Left lung (tissue), 14 donors: ENCODE measurements at regions of chr1 and their contacts with region 1.

Region 1: DNA sequence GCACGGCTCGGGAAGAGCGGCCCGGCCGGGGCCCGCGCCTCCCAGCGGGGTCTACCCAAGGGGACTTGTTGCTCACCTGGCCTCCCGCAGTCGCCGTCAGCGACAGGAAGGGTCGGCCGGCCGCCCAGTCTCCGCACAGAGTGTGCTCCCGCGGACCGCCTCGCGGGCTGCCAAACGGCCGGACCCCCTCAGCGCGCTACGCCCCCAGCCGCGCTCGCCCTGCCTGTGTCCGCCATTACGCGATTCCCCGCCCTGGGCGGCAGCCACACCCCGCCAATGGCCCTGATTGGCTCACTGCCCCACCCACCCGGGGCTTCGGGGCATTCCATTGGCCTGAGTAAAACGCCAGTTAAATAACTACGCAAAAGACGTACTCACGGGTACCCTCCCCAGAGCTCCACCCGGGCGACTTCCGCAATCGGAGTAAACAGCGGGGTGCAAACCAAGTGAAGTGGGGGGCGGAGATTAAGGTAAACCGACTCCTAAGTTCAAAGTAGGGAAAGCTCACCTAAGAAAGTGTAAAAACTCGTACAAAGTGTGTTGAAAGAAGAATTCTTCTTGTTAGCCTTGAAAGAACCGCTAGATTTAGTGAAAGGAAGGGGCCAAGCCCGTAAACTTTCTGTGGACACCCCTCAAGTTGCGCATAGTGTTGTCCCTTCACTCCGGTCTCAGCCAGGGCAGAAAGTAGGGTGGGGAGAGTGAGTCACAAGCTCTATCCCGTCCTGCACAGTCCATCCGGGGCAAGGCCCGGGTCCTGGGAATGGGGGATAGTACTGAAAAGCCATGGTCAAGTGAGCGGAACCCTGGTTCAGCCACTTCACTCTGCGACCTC is at the start of gene WASF2:
- DNase-seq: peak; percentile 97 to 98 (median 98)
- ATAC-seq: peak; percentile 94
- H3K4me3 ChIP-seq: peak within 1 kb of the TSS; percentile 80 to 99
- H3K27ac ChIP-seq: peak within 1 kb of the TSS; percentile 96 to 100
- H3K4me1 ChIP-seq: peaks cover 22 to 57% of the 10 kb centered on the region in 2 donors
- H3K27me3 ChIP-seq: no peaks in the 10 kb centered on the region
- CTCF ChIP-seq: no peak
- polyA plus RNA-seq, gene WASF2: 110 to 147 (median 136) TPM

Region 2: GRCh38 chr1:27218736-27219135 is 271.4 kb before region 1 on chr1:
- intact Hi-C with region 1: no loop called
- DNase-seq: no peak
- ATAC-seq: no peak
- H3K4me3 ChIP-seq: no peak overlapping the region
- H3K27ac ChIP-seq: no peak overlapping the region
- H3K4me1 ChIP-seq: no peaks in the 10 kb centered on the region
- H3K27me3 ChIP-seq: no peaks in the 10 kb centered on the region
- CTCF ChIP-seq: no peak

Region 3: DNA sequence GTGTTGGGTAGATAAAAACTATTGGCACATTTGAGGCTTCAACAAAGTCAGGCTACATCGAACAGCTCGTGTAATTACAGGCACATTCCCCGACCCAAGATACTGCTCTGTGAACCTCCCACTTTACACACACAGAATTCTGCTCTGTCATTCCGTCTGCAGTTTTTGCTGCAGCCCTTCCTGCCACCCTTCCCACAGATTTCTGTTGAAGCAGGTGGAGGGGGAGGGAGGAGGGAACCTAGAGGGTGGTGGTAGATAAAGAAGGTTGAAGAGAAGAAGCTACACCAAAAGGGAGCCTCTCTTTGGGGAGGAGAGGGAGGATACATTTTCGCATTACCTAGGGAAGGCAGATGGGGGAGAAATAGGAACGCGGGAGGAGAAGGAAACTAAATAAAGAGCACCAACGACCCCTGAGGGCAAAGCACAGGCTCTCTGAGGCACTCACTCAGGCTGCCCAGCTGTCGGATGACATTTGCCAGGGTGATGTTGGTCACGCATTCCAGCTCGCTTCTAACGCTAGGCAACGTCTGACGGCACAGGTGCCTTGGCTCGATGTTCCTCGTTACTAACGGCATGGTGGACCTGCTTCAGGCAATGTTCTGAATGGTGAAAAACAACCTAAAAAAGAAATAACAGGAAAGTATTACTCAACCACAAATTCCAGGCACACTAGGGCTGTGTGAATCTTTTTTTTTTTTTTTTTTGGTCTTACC is 61.7 kb before region 1 on chr1:
- intact Hi-C with region 1: loop called in 1 of 2 experiments (anchors 10 kb)
- DNase-seq: no peak
- ATAC-seq: peak; percentile 24
- H3K4me3 ChIP-seq: no peak overlapping the region
- H3K27ac ChIP-seq: peak overlapping the region in 1 of 2 donors; percentile 85
- H3K4me1 ChIP-seq: peaks cover 40 to 79% of the 10 kb centered on the region in 2 donors
- H3K27me3 ChIP-seq: no peaks in the 10 kb centered on the region
- CTCF ChIP-seq: no peak